WTC11 (cell line): ENCODE measurements at regions of chr9 and their contacts with region 1.

Region 1: DNA sequence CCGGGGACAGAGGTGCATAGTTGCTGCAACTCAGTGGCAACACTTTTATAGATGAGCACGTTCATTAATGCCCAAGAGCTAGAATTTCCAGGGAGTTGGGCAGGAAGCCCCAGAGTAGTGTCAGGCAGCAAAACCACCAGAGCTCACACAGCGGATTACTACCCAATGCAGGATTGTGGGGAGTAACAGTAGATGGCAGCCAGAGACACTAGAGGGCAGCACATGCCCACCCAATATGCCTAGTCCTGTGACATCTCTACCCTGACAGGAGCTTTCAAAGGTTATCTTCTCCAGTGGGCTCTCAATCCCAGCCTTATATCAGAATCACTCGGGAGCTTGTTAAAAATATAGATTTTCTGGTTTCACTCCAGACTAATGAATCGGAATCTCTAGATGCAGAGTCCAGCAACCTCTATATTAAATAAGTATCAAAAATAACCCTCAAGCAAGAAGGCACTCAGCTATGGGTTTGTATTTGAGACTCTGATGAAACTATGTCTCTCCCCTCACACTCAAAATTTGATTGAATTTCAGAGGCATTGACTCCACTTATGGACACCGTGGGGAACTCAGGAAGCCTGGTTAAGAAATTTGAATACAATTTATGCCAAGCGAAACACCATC is 58.4 kb upstream of the PHF24 start:
- DNase-seq: peak; percentile 83
- ATAC-seq: peak; percentile 100
- H3K4me3 Mint-ChIP-seq: no peak overlapping the region
- H3K27ac Mint-ChIP-seq: no peak overlapping the region
- H3K4me1 Mint-ChIP-seq: peaks cover 2% of the 10 kb centered on the region
- H3K27me3 Mint-ChIP-seq: peaks cover 25% of the 10 kb centered on the region
- CTCF ChIP-seq: peak; percentile 72

Region 2: DNA sequence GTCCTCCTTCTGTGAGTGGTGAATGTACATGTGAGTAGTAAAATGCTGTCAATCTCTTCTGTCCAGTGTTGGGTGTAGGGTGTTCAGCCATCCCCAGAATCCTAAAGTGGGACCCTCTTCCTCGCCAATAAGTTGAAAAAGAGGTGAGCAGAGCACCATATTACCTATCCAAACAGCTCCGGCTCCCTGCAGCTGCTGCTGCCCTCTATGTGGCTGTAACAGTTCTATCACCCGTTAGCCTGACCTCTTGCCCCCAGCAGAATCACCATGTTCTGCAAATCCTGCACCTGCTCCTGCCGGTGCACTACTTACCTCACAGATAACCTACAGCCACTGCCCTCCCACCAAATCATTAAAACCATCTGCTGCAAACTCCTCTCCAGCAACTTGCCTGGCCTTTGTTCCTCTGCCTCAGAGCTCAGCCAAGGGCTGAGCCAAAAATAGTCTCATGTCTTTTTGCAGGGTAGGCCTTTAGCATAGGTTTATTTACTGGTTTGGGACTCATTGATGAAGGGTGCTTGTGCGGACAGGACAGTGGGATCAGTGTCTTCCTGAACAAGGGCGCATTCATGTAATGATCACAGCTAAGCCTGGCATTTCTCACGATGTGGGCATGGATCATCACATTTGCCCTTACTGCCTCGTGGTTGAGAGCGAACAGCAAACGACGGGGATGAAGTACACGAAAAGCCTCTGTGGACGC is 140.1 kb before region 1 on chr9:
- CTCF ChIA-PET with region 1: interaction called, 56 read pairs
- POLR2A ChIA-PET with region 1: no interaction called
- DNase-seq: no peak
- ATAC-seq: no peak
- H3K4me3 Mint-ChIP-seq: no peak overlapping the region
- H3K27ac Mint-ChIP-seq: no peak overlapping the region
- H3K4me1 Mint-ChIP-seq: no peaks in the 10 kb centered on the region
- H3K27me3 Mint-ChIP-seq: peaks cover 22% of the 10 kb centered on the region
- CTCF ChIP-seq: no peak

Region 3: DNA sequence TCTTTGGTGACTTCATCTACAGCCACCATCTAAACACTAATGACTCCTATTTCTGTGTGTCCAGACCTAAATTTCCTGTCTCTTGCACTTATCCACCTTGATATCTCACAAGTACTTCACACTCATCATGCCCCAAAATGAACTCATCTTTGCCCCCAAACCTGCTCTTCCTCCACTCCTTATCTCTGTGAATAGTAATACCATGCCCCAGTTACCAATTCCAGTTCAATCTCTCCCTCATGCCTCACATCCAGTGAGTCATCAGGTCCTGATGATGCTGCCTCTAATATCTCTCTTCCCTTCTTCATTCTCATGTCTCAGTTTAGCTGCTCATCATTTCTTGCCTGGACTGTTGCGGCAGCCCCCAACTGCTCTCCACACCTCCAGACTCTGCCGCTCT is 75.0 kb after region 1 on chr9:
- CTCF ChIA-PET with region 1: interaction called, 10 read pairs
- POLR2A ChIA-PET with region 1: no interaction called
- DNase-seq: no peak
- ATAC-seq: no peak
- H3K4me3 Mint-ChIP-seq: no peak overlapping the region
- H3K27ac Mint-ChIP-seq: no peak overlapping the region
- H3K4me1 Mint-ChIP-seq: peaks cover 12% of the 10 kb centered on the region
- H3K27me3 Mint-ChIP-seq: no peaks in the 10 kb centered on the region
- CTCF ChIP-seq: no peak

Region 4: GRCh38 chr9:35044061-35044460 is 144.4 kb after region 1 on chr9:
- CTCF ChIA-PET with region 1: interaction called, 14 read pairs
- POLR2A ChIA-PET with region 1: no interaction called
- DNase-seq: peak; percentile 21
- ATAC-seq: peak; percentile 83
- H3K4me3 Mint-ChIP-seq: no peak overlapping the region
- H3K27ac Mint-ChIP-seq: no peak overlapping the region
- H3K4me1 Mint-ChIP-seq: peaks cover 20% of the 10 kb centered on the region
- H3K27me3 Mint-ChIP-seq: no peaks in the 10 kb centered on the region
- CTCF ChIP-seq: no peak

Region 5: GRCh38 chr9:35079426-35080341 is 180.0 kb after region 1 on chr9 and contains the start of gene FANCG:
- CTCF ChIA-PET with region 1: interaction called, 18 read pairs
- POLR2A ChIA-PET with region 1: no interaction called
- DNase-seq: peak; percentile 89
- ATAC-seq: peak; percentile 92
- H3K4me3 Mint-ChIP-seq: peak within 1 kb of the TSS; percentile 92
- H3K27ac Mint-ChIP-seq: peak within 1 kb of the TSS; percentile 99
- H3K4me1 Mint-ChIP-seq: peaks cover 15% of the 10 kb centered on the region
- H3K27me3 Mint-ChIP-seq: no peaks in the 10 kb centered on the region
- CTCF ChIP-seq: no peak
- total RNA-seq, gene FANCG: 80.9 to 108 TPM (median 89.1 TPM) in 3 replicates

Region 6: GRCh38 chr9:35415386-35416096 is 515.9 kb after region 1 on chr9:
- CTCF ChIA-PET with region 1: interaction called, 10 read pairs
- POLR2A ChIA-PET with region 1: no interaction called
- DNase-seq: peak; percentile 23
- ATAC-seq: peak; percentile 98
- H3K4me3 Mint-ChIP-seq: no peak overlapping the region
- H3K27ac Mint-ChIP-seq: no peak overlapping the region
- H3K4me1 Mint-ChIP-seq: peaks cover 15% of the 10 kb centered on the region
- H3K27me3 Mint-ChIP-seq: peaks cover 1% of the 10 kb centered on the region
- CTCF ChIP-seq: no peak